ENCODE measurements at regions of chr1 and their contacts with region 1.

Region 1: GRCh38 chr1:218557731-218558130 is 212.6 kb downstream of the TGFB2 start:
- DNase-seq: peak in 1 of 4 experiments; percentile 6
- ATAC-seq: no peak
- H3K4me3 ChIP-seq: no peak overlapping the region
- H3K27ac ChIP-seq: no peak overlapping the region
- H3K4me1 ChIP-seq: no peaks in the 10 kb centered on the region; a peak in 1 of 5 replicates
- H3K27me3 ChIP-seq: no peaks in the 10 kb centered on the region
- CTCF ChIP-seq: no peak
- EP300 ChIP-seq: no peak
- POLR2A ChIP-seq: no peak
- RAD21 ChIP-seq: no peak

Region 2: GRCh38 chr1:218299416-218299815 is 258.3 kb before region 1 on chr1:
- CTCF ChIA-PET with region 1: no interaction called
- POLR2A ChIA-PET with region 1: no interaction called
- in situ Hi-C with region 1: no loop called
- intact Hi-C with region 1: loop called (anchors 2 kb)
- DNase-seq: peak in 3 of 4 experiments; percentile 25 to 78 (median 54)
- ATAC-seq: peak; percentile 76
- H3K4me3 ChIP-seq: no peak overlapping the region
- H3K27ac ChIP-seq: no peak overlapping the region
- H3K4me1 ChIP-seq: peaks cover 15 to 42% of the 10 kb centered on the region in 2 experiments
- H3K27me3 ChIP-seq: no peaks in the 10 kb centered on the region
- CTCF ChIP-seq: peak; percentile 54 to 80 (median 70)
- EP300 ChIP-seq: 0 out of 2 replicates have a peak, but pooled peaks have one; percentile 6
- POLR2A ChIP-seq: no peak
- RAD21 ChIP-seq: peak; percentile 69 to 82

Region 3: DNA sequence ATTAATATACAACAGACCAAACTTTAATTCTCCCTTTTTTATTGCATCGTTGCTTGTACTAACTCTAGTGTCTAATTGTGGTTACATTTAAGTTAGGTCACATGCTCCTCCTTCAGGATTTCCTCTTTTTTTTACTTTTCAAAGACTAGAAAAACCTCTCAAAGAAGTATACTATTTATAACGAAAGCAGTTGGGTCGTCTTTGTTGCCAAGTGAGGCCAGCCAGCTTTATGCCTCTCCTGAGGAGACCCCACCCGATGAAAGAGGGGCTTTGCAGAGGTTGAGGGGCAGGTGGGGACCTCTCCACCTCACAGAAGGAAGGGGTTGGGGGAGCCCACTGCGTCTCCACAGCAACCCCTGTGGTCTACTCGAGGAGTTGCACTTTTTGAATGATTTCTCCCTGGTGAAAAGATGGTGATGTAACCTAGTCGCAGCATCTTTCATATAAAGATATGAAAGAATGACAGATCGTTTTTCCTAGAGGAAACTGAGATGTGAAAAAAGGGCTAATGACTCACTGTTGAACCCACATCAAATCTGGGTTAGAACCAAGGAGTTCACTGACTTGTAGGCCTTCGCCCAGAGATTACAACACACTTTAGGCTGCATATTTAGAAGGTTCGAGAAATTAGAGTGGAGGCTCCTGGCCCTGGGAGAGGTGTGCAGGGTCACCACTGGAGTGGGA is 206.2 kb before region 1 on chr1:
- CTCF ChIA-PET with region 1: no interaction called
- POLR2A ChIA-PET with region 1: no interaction called
- in situ Hi-C with region 1: loop called (anchors 10 kb)
- intact Hi-C with region 1: no loop called
- DNase-seq: peak in 2 of 4 experiments; percentile 32 to 33
- ATAC-seq: peak; percentile 86
- H3K4me3 ChIP-seq: no peak overlapping the region
- H3K27ac ChIP-seq: no peak overlapping the region
- H3K4me1 ChIP-seq: peaks cover 0 to 4% of the 10 kb centered on the region in 2 experiments; a peak in 1 of 5 replicates
- H3K27me3 ChIP-seq: no peaks in the 10 kb centered on the region
- CTCF ChIP-seq: peak; percentile 32 to 56 (median 40)
- EP300 ChIP-seq: no peak
- POLR2A ChIP-seq: no peak
- RAD21 ChIP-seq: peak in 1 of 2 experiments; percentile 25; a peak in 1 of 4 replicates

Region 4: DNA sequence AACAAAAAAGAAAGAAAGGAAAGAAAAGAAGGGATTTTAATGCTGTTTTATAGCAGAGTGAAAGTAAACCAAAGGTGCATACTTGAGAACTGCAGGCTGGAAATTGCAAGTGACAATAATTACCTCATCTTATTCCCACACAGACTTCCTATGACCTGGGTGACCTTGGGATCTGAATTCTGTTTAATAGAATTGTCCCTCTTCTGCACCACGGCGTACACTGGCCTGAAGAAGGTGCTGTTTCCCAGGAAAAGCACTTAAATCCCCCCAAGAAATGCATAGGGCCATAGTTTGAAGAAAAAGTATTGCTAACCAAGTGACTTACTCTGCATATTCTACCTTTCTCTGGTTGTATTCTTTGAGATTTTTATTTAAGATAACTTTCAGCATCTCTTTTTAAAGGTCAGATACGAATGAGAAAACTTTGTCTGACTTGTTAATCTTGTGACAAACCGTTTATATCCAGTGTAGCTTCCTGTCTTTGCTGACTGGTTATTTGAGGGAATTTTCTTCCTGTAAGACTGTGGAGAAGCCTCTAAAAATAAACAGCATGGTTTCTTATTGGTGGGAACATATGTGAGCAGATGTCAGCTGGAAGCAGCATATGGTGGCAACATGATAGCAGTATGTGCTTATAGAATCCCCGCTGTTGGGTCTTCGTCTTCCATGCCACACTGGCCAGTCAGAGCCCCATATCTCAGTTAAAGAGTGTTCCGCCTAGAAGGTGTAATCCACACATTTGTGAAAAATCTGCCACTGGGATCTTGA is 196.2 kb before region 1 on chr1:
- CTCF ChIA-PET with region 1: no interaction called
- POLR2A ChIA-PET with region 1: no interaction called
- in situ Hi-C with region 1: loop called (anchors 10 kb)
- intact Hi-C with region 1: loop called (anchors 10 kb)
- DNase-seq: peak in 2 of 4 experiments; percentile 22 to 37
- ATAC-seq: peak; percentile 72
- H3K4me3 ChIP-seq: no peak overlapping the region
- H3K27ac ChIP-seq: no peak overlapping the region
- H3K4me1 ChIP-seq: peaks cover 0 to 10% of the 10 kb centered on the region in 2 experiments; a peak in 3 of 5 replicates
- H3K27me3 ChIP-seq: no peaks in the 10 kb centered on the region
- CTCF ChIP-seq: peak; percentile 46 to 65 (median 60); a peak in 5 of 6 replicates
- EP300 ChIP-seq: no peak
- POLR2A ChIP-seq: no peak
- RAD21 ChIP-seq: peak; percentile 35 to 74